Activated CD4-positive, alpha-beta T cell treated with anti-CD3 and anti-CD28 coated beads, Interleukin-2, amount 10 ng/mL, durations not matched to agents 7 days and 5 days (primary cell): ENCODE measurements at regions of chr4 and their contacts with region 1.

Region 1: DNA sequence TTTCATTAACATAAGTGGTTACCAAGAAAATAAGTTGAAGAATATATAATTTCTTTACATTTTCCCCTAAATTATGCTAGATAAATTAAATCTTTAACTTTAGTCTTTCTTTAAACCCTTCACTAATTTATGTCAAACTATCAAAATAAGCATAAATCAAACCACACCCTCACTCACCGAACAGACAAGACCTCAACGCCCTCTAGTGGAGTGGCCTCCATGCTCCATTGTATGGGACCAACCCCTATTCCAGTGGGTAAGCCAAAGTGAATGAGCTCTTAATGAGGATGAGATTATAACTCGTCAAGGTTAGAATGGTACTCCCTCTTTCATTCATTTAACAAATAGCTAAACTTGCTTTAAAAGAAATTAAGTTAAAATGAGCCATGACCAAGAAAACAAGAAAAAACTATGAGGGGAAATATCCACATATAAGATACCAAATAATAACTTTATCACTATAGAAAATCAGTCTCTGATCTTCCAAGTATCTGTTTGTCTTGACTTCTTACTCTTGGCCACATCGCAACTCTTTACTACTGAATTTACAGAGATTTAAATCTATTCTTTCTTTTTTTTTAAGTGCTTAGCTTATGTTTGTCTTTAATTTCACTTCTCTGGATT is 15.6 kb upstream of the BBS12 start:
- DNase-seq: peak; percentile 83
- H3K4me3 Mint-ChIP-seq: no peak overlapping the region
- H3K27ac Mint-ChIP-seq: no peak overlapping the region
- H3K4me1 Mint-ChIP-seq: peaks cover 37% of the 10 kb centered on the region
- H3K27me3 Mint-ChIP-seq: no peaks in the 10 kb centered on the region

Region 2: DNA sequence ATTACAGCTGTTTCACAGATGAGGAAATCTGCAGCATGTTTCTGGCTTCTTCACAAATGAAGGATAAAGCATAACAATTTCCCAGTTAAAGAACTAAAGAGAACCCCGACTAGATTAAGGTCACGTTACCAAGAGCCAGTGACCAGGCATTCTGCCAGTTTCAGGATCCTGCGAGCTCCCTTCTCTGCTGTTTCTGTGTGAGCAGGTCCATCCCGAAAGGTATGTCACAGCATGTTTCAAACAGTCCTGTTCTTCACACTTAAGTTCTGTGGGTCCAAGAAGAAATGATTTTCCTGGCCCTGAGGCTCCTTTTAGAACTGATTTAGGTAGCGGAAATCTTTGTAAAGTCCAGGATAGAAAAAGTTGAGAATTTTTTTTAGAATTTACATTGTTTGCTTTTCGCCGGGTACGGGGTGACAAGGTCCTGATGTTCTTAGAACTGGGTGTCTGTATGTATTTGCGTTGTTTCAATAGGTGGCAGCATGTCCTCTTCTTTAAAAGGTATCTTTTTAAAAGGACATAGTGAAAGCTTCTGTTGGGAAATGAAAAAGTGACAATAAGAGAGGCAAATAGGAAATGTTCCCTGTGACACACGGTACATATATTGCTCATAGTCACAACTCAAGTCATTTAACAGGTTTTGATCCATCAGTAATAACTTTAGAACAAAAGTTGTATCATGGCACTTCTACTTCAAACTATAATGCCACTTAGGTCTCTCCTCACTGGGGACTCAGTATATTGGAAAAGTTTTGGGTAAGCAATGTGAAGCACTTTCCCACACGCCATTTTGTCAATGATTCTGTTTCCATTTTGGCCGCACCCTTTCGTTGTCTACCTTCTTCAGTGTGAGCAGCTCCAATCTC is 114.4 kb before region 1 on chr4:
- CTCF ChIA-PET with region 1: interaction called, 19 read pairs
- POLR2A ChIA-PET with region 1: interaction called, 5 read pairs
- DNase-seq: peak; percentile 37
- H3K4me3 Mint-ChIP-seq: no peak overlapping the region
- H3K27ac Mint-ChIP-seq: no peak overlapping the region
- H3K4me1 Mint-ChIP-seq: peaks cover 17% of the 10 kb centered on the region
- H3K27me3 Mint-ChIP-seq: peaks cover 6% of the 10 kb centered on the region